ENCODE measurements at regions of chr10 and their contacts with region 1.

Region 1: DNA sequence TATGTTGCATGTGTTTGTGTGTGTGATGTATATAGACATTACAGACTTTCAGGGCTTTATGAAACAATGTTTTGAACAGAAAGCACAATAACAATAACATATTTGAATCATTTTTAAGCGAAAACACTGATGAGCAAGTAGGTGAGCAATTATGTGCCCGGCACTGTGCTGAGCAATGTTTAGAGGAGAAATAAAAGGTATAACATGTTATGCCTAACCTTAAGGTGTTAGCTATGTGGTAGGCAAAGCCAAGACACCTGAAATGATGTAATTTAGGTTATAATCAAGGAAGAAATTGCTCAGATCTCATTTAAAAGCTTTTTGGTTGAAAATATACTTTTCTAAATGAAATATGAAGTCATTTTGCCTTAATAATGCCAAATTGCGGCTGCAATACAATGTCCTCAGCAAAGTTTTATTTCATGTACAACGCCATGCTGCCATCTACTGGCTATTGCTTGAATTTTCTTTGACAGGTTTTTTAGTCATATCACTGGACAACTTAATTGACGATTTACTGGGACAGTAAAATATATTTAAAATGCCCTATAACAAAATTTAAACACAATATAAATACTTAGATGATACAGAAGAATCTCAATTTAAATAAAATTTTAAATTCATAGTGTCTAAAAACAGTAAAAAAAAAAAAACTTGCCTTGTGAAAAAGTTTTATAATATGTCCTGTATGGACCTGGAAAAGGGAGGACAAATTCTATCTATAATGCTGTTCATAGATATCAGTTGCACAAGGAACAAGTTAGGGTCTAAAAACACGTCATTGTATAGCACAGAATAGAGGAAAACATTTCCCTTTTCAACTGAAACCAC is 131.1 kb upstream of the CDK1 start:
- DNase-seq: peak; percentile 46
- ATAC-seq: peak; percentile 65; the same call in 2 of the 3 replicates
- H3K4me3 ChIP-seq: no peak overlapping the region
- H3K27ac ChIP-seq: no peak overlapping the region
- H3K4me1 ChIP-seq: no peaks in the 10 kb centered on the region
- H3K27me3 ChIP-seq: no peaks in the 10 kb centered on the region
- CTCF ChIP-seq: peak; percentile 68
- EP300 ChIP-seq: no peak
- POLR2A ChIP-seq: no peak
- RAD21 ChIP-seq: peak; percentile 44; the same call in 1 of the 2 replicates

Region 2: GRCh38 chr10:60099998-60100747 is 547.0 kb before region 1 on chr10:
- CTCF ChIA-PET with region 1: interaction called, 3 read pairs
- POLR2A ChIA-PET with region 1: no interaction called
- in situ Hi-C with region 1: no loop called
- intact Hi-C with region 1: loop called (anchors 1 kb)
- DNase-seq: peak; percentile 39
- ATAC-seq: peak; percentile 49
- H3K4me3 ChIP-seq: no peak overlapping the region
- H3K27ac ChIP-seq: no peak overlapping the region
- H3K4me1 ChIP-seq: peaks cover 8% of the 10 kb centered on the region
- H3K27me3 ChIP-seq: no peaks in the 10 kb centered on the region
- CTCF ChIP-seq: peak; percentile 55
- EP300 ChIP-seq: no peak
- POLR2A ChIP-seq: no peak
- RAD21 ChIP-seq: no peak

Region 3: DNA sequence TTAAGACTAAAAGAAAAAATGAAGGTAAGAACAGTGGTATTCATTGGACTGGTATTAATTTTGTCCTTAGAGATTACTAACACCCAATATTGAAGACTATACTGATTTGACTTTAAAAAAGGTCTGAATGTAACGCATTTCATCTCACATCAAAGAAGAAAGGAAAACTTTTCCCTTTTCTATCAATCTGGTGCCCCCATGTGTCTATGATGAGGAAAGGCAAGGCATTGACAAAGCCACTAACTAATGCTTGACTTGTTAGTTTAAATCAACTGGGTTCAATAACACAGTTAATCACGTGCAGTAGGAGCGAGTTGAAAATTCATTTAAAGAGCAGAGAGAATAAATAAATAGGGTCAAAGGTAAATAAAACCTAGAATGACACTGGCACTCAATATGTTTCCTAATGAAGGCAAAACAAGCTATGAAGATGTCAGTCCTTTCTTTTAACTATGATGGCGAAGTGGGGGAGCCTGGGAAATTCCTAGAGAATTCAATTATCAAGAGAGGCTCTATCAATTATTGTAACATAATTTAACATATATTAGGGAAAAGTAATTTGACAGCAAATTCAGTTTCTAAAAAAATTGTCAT is 438.4 kb before region 1 on chr10:
- CTCF ChIA-PET with region 1: no interaction called
- POLR2A ChIA-PET with region 1: no interaction called
- in situ Hi-C with region 1: no loop called
- intact Hi-C with region 1: loop called (anchors 5 kb)
- DNase-seq: peak; percentile 18
- ATAC-seq: 0 out of 3 replicates have a peak, but pooled peaks have one; percentile 41
- H3K4me3 ChIP-seq: no peak overlapping the region
- H3K27ac ChIP-seq: no peak overlapping the region
- H3K4me1 ChIP-seq: no peaks in the 10 kb centered on the region
- H3K27me3 ChIP-seq: no peaks in the 10 kb centered on the region
- CTCF ChIP-seq: peak; percentile 64
- EP300 ChIP-seq: no peak
- POLR2A ChIP-seq: no peak
- RAD21 ChIP-seq: peak; percentile 32; the same call in 1 of the 2 replicates

Region 4: GRCh38 chr10:60444494-60445064 is 202.6 kb before region 1 on chr10:
- CTCF ChIA-PET with region 1: interaction called, 12 read pairs
- POLR2A ChIA-PET with region 1: no interaction called
- in situ Hi-C with region 1: no loop called
- intact Hi-C with region 1: loop called (anchors 1 kb)
- DNase-seq: peak; percentile 4
- ATAC-seq: no peak
- H3K4me3 ChIP-seq: no peak overlapping the region
- H3K27ac ChIP-seq: no peak overlapping the region
- H3K4me1 ChIP-seq: no peaks in the 10 kb centered on the region
- H3K27me3 ChIP-seq: no peaks in the 10 kb centered on the region
- CTCF ChIP-seq: peak; percentile 36
- EP300 ChIP-seq: no peak
- POLR2A ChIP-seq: no peak
- RAD21 ChIP-seq: no peak

Region 5: GRCh38 chr10:60549686-60550085 is 97.5 kb before region 1 on chr10:
- CTCF ChIA-PET with region 1: interaction called, 11 read pairs
- POLR2A ChIA-PET with region 1: no interaction called
- in situ Hi-C with region 1: loop called (anchors 10 kb)
- intact Hi-C with region 1: loop called (anchors 1 kb)
- DNase-seq: peak; percentile 6
- ATAC-seq: peak; percentile 28; the same call in 1 of the 3 replicates
- H3K4me3 ChIP-seq: no peak overlapping the region
- H3K27ac ChIP-seq: no peak overlapping the region
- H3K4me1 ChIP-seq: no peaks in the 10 kb centered on the region
- H3K27me3 ChIP-seq: no peaks in the 10 kb centered on the region
- CTCF ChIP-seq: peak; percentile 53
- EP300 ChIP-seq: no peak
- POLR2A ChIP-seq: no peak
- RAD21 ChIP-seq: no peak

Region 6: GRCh38 chr10:60769406-60769805 is 122.2 kb after region 1 on chr10:
- CTCF ChIA-PET with region 1: no interaction called
- POLR2A ChIA-PET with region 1: no interaction called
- in situ Hi-C with region 1: no loop called
- intact Hi-C with region 1: loop called (anchors 5 kb)
- DNase-seq: no peak
- ATAC-seq: no peak
- H3K4me3 ChIP-seq: no peak overlapping the region
- H3K27ac ChIP-seq: no peak overlapping the region
- H3K4me1 ChIP-seq: no peaks in the 10 kb centered on the region
- H3K27me3 ChIP-seq: peaks cover 0 to 11% of the 10 kb centered on the region in 2 experiments; a peak in 2 of 5 replicates
- CTCF ChIP-seq: no peak
- EP300 ChIP-seq: no peak
- POLR2A ChIP-seq: no peak
- RAD21 ChIP-seq: no peak